Panc1 (cell line): ENCODE measurements at regions of chr21 and their contacts with region 1.

Region 1: GRCh38 chr21:36927719-36928117 is 38.8 kb downstream of the HLCS start:
- DNase-seq: peak; percentile 52
- ATAC-seq: peak; percentile 96
- H3K4me3 ChIP-seq: no peak overlapping the region
- H3K27ac ChIP-seq: no peak overlapping the region
- H3K4me1 ChIP-seq: 0 out of 2 replicates have a peak, but pooled peaks cover 7% of the 10 kb centered on the region
- H3K27me3 ChIP-seq: no peaks in the 10 kb centered on the region
- CTCF ChIP-seq: peak; percentile 90

Region 2: GRCh38 chr21:36504067-36505058 is 423.4 kb before region 1 on chr21:
- CTCF ChIA-PET with region 1: no interaction called
- POLR2A ChIA-PET with region 1: no interaction called
- in situ Hi-C with region 1: no loop called
- intact Hi-C with region 1: loop called (anchors 10 kb)
- DNase-seq: peak; percentile 18
- ATAC-seq: no peak
- H3K4me3 ChIP-seq: no peak overlapping the region
- H3K27ac ChIP-seq: no peak overlapping the region
- H3K4me1 ChIP-seq: no peaks in the 10 kb centered on the region
- H3K27me3 ChIP-seq: no peaks in the 10 kb centered on the region
- CTCF ChIP-seq: peak; percentile 76

Region 3: DNA sequence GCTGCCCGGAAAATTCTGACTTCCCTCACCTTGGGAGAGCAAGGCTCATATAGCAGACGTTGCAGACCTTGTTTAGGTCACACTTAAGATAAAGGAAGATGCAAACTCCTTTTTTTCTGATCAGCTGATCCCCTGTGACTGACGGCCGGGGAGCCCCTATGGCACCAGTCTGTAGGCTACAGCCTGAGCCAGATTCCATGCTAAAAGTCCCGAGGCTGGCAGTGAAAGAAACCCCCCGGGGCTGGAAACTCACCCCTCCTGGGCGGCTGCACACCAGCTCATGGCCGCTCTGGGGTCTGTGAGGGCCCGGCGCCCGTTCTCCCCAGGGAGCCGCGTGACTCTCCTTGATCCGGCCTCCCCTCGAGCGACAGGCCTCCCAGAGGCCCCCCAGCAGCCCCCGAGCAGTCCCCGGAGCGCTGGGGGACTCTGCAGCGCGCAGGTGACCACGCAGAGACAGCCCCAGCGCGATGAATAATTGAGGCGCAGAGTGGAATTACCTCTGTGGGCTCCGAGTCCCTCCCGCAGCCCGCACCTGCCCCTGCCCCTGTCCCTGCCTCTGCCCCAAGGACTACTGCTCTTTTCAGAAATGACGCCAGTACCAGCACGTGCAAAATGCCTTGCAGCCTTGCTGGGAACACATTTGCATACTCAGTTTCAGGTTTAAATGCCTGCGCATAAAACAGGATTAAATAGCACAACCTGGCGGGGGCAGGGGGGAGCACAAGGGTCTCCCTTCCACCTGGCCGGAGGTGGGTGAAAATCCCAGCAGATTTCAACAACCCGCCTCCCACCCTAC is 385.2 kb before region 1 on chr21:
- CTCF ChIA-PET with region 1: no interaction called
- POLR2A ChIA-PET with region 1: no interaction called
- in situ Hi-C with region 1: no loop called
- intact Hi-C with region 1: no loop called
- DNase-seq: no peak
- ATAC-seq: no peak
- H3K4me3 ChIP-seq: no peak overlapping the region
- H3K27ac ChIP-seq: no peak overlapping the region
- H3K4me1 ChIP-seq: no peaks in the 10 kb centered on the region
- H3K27me3 ChIP-seq: no peaks in the 10 kb centered on the region; the same call in 1 of the 2 replicates
- CTCF ChIP-seq: no peak

Region 4: GRCh38 chr21:36738489-36739126 is 189.1 kb before region 1 on chr21:
- CTCF ChIA-PET with region 1: no interaction called
- POLR2A ChIA-PET with region 1: interaction called, 12 read pairs
- in situ Hi-C with region 1: no loop called
- intact Hi-C with region 1: no loop called
- DNase-seq: no peak
- ATAC-seq: no peak
- H3K4me3 ChIP-seq: no peak overlapping the region
- H3K27ac ChIP-seq: no peak overlapping the region
- H3K4me1 ChIP-seq: no peaks in the 10 kb centered on the region
- H3K27me3 ChIP-seq: no peaks in the 10 kb centered on the region
- CTCF ChIP-seq: no peak

Region 5: GRCh38 chr21:36749935-36750578 is 177.7 kb before region 1 on chr21:
- CTCF ChIA-PET with region 1: interaction called, 3 read pairs
- POLR2A ChIA-PET with region 1: no interaction called
- in situ Hi-C with region 1: no loop called
- intact Hi-C with region 1: loop called (anchors 10 kb)
- DNase-seq: no peak
- ATAC-seq: no peak
- H3K4me3 ChIP-seq: no peak overlapping the region
- H3K27ac ChIP-seq: no peak overlapping the region
- H3K4me1 ChIP-seq: 0 out of 2 replicates have a peak, but pooled peaks cover 3% of the 10 kb centered on the region
- H3K27me3 ChIP-seq: no peaks in the 10 kb centered on the region
- CTCF ChIP-seq: no peak

Region 6: DNA sequence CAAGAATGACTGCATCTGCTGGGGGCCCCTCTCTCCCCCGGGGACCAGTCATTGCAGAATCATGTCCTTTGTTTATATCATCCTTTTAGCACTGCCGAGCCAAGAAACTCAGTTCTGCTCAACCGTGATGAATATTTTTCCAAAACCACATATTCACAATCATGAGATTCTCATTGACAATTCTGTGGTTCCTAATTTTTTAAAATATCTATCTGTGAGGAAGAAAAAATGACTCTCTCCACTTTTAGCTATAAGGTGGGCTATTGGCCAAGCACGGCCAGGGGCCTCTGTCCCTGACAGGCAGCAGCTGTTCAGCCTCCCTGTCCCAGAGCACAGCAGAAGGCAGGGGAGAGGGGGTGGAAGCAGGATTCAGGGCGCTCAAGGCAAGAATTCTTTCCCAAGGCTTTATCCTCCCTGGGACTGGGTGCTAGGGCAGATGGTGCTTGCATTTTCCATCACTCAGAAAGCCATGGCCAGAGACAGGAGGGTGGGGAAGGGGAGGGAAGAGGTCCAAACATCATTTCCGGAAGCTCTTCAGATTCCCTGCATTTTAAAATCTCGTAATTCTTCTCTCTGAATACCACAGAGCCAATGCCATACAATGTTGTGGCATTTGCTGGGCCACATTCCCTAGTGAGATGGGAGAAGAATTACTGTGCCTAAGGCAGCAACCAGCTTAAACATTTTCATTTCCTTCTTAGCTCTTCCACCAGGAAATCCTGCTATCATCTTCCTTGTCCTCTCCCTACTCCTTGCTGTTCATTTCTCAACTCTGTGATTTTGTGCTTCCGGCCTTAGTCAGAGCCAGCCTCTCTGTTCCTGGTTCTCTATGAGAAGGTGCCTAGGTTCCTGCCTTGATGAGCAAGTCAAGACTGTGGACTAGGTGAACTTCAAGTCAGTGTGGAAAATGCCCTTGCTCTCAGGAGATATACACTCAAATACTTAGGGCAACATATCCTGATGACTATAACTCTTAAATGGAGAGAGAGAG is 928.2 kb after region 1 on chr21:
- CTCF ChIA-PET with region 1: no interaction called
- POLR2A ChIA-PET with region 1: no interaction called
- in situ Hi-C with region 1: no loop called
- intact Hi-C with region 1: no loop called
- DNase-seq: no peak
- ATAC-seq: no peak
- H3K4me3 ChIP-seq: no peak overlapping the region
- H3K27ac ChIP-seq: no peak overlapping the region
- H3K4me1 ChIP-seq: no peaks in the 10 kb centered on the region
- H3K27me3 ChIP-seq: no peaks in the 10 kb centered on the region
- CTCF ChIP-seq: no peak